Psoas muscle (tissue), 8 donors: ENCODE measurements at regions of chr17 and their contacts with region 1.

Region 1: GRCh38 chr17:81821603-81822311 is 11.3 kb downstream of the MCRIP1 start:
- DNase-seq: peak; percentile 86 to 95
- ATAC-seq: peak; percentile 75 to 86 (median 82)
- H3K4me3 ChIP-seq: peak overlapping the region; percentile 18
- H3K27ac ChIP-seq: peak overlapping the region; percentile 89
- H3K4me1 ChIP-seq: peaks cover 20% of the 10 kb centered on the region
- H3K27me3 ChIP-seq: peaks cover 0 to 1% (median 0%) of the 10 kb centered on the region in 3 donors
- CTCF ChIP-seq: peak; percentile 70

Region 2: GRCh38 chr17:81854974-81855774 is 33.4 kb after region 1 on chr17:
- intact Hi-C with region 1: loop called (anchors 2 to 5 kb)
- DNase-seq: no peak
- ATAC-seq: peak; percentile 60 to 76 (median 70)
- H3K4me3 ChIP-seq: peak overlapping the region; percentile 11
- H3K27ac ChIP-seq: peak overlapping the region; percentile 46
- H3K4me1 ChIP-seq: peaks cover 35% of the 10 kb centered on the region
- H3K27me3 ChIP-seq: no peaks in the 10 kb centered on the region
- CTCF ChIP-seq: peak; percentile 40

Region 3: GRCh38 chr17:82129095-82129494 is 307.3 kb after region 1 on chr17:
- intact Hi-C with region 1: no loop called
- DNase-seq: no peak
- ATAC-seq: no peak
- H3K4me3 ChIP-seq: no peak overlapping the region
- H3K27ac ChIP-seq: no peak overlapping the region
- H3K4me1 ChIP-seq: no peaks in the 10 kb centered on the region
- H3K27me3 ChIP-seq: no peaks in the 10 kb centered on the region
- CTCF ChIP-seq: no peak